Sigmoid colon (tissue), 7 donors: ENCODE measurements at regions of chr6 and their contacts with region 1.

Region 1: GRCh38 chr6:53171605-53172446 is 23.2 kb upstream of the GCM1 start:
- DNase-seq: peak; percentile 94
- H3K4me3 ChIP-seq: no peak overlapping the region
- H3K27ac ChIP-seq: no peak overlapping the region
- H3K4me1 ChIP-seq: peaks cover 0 to 16% (median 2%) of the 10 kb centered on the region in 4 donors
- H3K27me3 ChIP-seq: no peaks in the 10 kb centered on the region
- CTCF ChIP-seq: peak; percentile 100
- EP300 ChIP-seq: no peak
- POLR2A ChIP-seq: no peak

Region 2: DNA sequence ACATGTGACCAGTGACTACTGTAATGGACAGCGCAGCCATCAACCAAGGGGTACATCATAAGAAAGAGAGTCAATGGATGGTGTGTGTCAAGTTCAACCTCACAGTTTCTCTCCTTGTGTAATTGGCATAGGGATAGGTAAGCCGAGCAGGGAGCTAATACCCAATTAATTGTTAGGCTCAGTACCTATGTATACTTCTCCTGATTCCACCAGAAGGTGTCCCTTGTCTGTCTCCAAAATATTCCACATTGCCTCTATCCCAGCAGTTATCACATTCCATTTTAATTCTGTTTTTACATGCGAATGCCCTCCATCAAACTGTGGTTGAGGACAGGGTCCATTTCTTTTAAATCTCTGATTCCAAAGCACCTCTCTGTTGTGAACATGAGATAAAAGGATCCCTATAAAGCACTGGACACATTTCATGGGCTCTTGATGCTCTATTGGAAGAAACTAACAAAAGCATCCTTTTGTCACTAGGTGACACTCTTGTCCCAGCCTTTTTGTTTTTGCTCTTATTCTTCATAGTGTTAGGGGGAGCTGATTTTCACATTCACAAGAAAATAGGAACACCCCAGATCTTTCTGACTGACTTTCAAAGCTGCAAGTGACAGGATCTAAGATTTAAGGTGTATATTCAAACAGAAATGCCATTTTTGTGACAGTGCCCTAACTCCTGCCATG is 67.7 kb before region 1 on chr6:
- intact Hi-C with region 1: loop called (anchors 2 kb)
- DNase-seq: no peak
- H3K4me3 ChIP-seq: no peak overlapping the region
- H3K27ac ChIP-seq: peak overlapping the region in 1 of 4 donors; percentile 45
- H3K4me1 ChIP-seq: peaks cover 0 to 20% (median 12%) of the 10 kb centered on the region in 4 donors
- H3K27me3 ChIP-seq: no peaks in the 10 kb centered on the region
- CTCF ChIP-seq: peak in 3 of 4 experiments; percentile 4 to 37 (median 17)
- EP300 ChIP-seq: no peak
- POLR2A ChIP-seq: no peak

Region 3: GRCh38 chr6:53359072-53359842 is 187.4 kb after region 1 on chr6:
- intact Hi-C with region 1: loop called (anchors 5 kb)
- DNase-seq: peak; percentile 97
- H3K4me3 ChIP-seq: peak overlapping the region; percentile 51 to 72 (median 64)
- H3K27ac ChIP-seq: peak overlapping the region; percentile 89 to 96 (median 94)
- H3K4me1 ChIP-seq: peaks cover 0 to 16% (median 4%) of the 10 kb centered on the region in 4 donors
- H3K27me3 ChIP-seq: no peaks in the 10 kb centered on the region
- CTCF ChIP-seq: no peak
- EP300 ChIP-seq: peak in 2 of 4 donors; percentile 26 to 35
- POLR2A ChIP-seq: peak; percentile 28 to 53

Region 4: GRCh38 chr6:53484476-53485280 is 312.9 kb after region 1 on chr6:
- intact Hi-C with region 1: loop called (anchors 1 kb)
- DNase-seq: peak; percentile 84
- H3K4me3 ChIP-seq: peak overlapping the region in 1 of 4 donors; percentile 6
- H3K27ac ChIP-seq: no peak overlapping the region
- H3K4me1 ChIP-seq: peaks cover 0 to 11% (median 5%) of the 10 kb centered on the region in 4 donors
- H3K27me3 ChIP-seq: no peaks in the 10 kb centered on the region
- CTCF ChIP-seq: peak; percentile 82 to 96 (median 90)
- EP300 ChIP-seq: no peak
- POLR2A ChIP-seq: no peak

Region 5: DNA sequence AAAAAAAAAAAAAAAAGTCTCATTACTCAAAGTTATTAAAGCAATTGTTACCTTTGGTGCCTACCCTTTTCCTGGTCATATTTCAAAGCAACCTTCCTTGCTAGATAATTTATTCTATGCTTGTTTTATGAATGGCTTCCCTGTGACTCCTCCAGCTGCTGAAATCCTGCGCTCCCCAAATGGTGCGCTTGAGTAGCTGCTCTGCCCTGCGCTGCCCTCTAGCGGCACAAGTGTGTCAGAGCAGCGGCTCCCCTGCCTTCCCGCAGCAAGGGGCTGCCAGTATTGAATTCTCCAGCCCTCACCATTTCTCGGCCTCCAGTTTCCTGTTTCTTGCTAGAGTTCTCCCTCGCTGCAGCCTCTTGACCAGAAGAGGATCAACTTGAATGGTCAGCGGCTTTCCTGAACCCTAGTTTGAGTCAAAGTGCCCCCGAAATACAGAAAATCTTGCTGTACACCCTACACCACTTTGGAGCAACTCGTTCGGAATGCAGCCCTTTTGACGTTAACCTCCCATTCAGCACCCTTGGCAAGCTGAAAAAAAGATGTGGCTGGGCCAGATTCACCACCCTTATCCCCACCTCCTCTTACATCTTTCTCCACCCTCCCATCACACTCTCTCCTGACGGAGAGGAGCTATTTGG is 554.1 kb after region 1 on chr6:
- intact Hi-C with region 1: loop called (anchors 5 kb)
- DNase-seq: peak; percentile 86
- H3K4me3 ChIP-seq: no peak overlapping the region
- H3K27ac ChIP-seq: no peak overlapping the region
- H3K4me1 ChIP-seq: peaks cover 0 to 3% (median 0%) of the 10 kb centered on the region in 4 donors
- H3K27me3 ChIP-seq: no peaks in the 10 kb centered on the region
- CTCF ChIP-seq: peak; percentile 69 to 95 (median 84)
- EP300 ChIP-seq: no peak
- POLR2A ChIP-seq: no peak